B cell (primary cell): ENCODE measurements at regions of chr6 and their contacts with region 1.

Region 1: DNA sequence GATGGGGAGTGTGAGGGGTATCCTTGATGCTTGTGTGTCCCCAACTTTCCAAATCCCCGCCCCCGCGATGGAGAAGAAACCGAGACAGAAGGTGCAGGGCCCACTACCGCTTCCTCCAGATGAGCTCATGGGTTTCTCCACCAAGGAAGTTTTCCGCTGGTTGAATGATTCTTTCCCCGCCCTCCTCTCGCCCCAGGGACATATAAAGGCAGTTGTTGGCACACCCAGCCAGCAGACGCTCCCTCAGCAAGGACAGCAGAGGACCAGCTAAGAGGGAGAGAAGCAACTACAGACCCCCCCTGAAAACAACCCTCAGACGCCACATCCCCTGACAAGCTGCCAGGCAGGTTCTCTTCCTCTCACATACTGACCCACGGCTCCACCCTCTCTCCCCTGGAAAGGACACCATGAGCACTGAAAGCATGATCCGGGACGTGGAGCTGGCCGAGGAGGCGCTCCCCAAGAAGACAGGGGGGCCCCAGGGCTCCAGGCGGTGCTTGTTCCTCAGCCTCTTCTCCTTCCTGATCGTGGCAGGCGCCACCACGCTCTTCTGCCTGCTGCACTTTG is at the start of gene TNF:
- DNase-seq: peak; percentile 84
- ATAC-seq: peak; percentile 40
- H3K4me3 ChIP-seq: peak within 1 kb of the TSS; percentile 74 to 87 (median 77)
- H3K4me3 Mint-ChIP-seq: peak within 1 kb of the TSS; percentile 89
- H3K27ac ChIP-seq: peak within 1 kb of the TSS; percentile 77 to 89
- H3K27ac Mint-ChIP-seq: peak within 1 kb of the TSS; percentile 93
- H3K4me1 ChIP-seq: peaks cover 80 to 99% of the 10 kb centered on the region in 2 donors
- H3K4me1 Mint-ChIP-seq: peaks cover 94% of the 10 kb centered on the region
- H3K27me3 ChIP-seq: no peaks in the 10 kb centered on the region
- H3K27me3 Mint-ChIP-seq: no peaks in the 10 kb centered on the region
- CTCF ChIP-seq: no peak
- total RNA-seq, gene TNF: 22.2 and 22.6 TPM in 2 replicates

Region 2: GRCh38 chr6:31216208-31216898 is 359.1 kb before region 1 on chr6:
- CTCF ChIA-PET with region 1: no interaction called
- POLR2A ChIA-PET with region 1: interaction called, 10 read pairs
- intact Hi-C with region 1: no loop called
- DNase-seq: peak; percentile 25
- ATAC-seq: peak; percentile 41
- H3K4me3 ChIP-seq: peak overlapping the region in 1 of 5 experiments; percentile 20
- H3K4me3 Mint-ChIP-seq: peak overlapping the region; percentile 8
- H3K27ac ChIP-seq: peak overlapping the region; percentile 64 to 66
- H3K27ac Mint-ChIP-seq: peak overlapping the region; percentile 70
- H3K4me1 ChIP-seq: peaks cover 9 to 13% of the 10 kb centered on the region in 2 donors
- H3K4me1 Mint-ChIP-seq: peaks cover 7% of the 10 kb centered on the region
- H3K27me3 ChIP-seq: no peaks in the 10 kb centered on the region
- H3K27me3 Mint-ChIP-seq: no peaks in the 10 kb centered on the region
- CTCF ChIP-seq: no peak

Region 3: DNA sequence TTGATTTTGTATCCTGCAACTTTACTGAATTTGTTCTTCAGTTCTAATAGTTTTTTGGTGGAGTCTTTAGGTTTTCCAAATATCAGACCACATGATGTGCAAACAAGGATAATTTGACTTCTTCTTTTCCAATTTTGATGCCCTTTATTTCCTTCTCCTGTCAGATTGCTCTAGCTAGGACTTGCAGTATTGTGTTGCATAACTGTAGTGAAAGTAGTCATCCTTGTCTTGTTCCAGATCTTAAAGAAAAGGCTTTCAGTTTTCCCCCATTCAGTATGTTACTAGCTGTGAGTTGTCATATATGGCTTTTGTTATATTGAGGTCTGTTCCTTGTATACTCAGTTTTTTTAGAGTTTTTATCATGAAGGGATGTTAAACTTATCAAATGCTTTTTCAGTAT is 72.8 kb before region 1 on chr6:
- CTCF ChIA-PET with region 1: no interaction called
- POLR2A ChIA-PET with region 1: no interaction called
- intact Hi-C with region 1: no loop called
- DNase-seq: no peak
- ATAC-seq: no peak
- H3K4me3 ChIP-seq: no peak overlapping the region
- H3K4me3 Mint-ChIP-seq: no peak overlapping the region
- H3K27ac ChIP-seq: no peak overlapping the region
- H3K27ac Mint-ChIP-seq: no peak overlapping the region
- H3K4me1 ChIP-seq: peaks cover 10 to 12% of the 10 kb centered on the region in 2 donors
- H3K4me1 Mint-ChIP-seq: peaks cover 49% of the 10 kb centered on the region
- H3K27me3 ChIP-seq: no peaks in the 10 kb centered on the region
- H3K27me3 Mint-ChIP-seq: no peaks in the 10 kb centered on the region
- CTCF ChIP-seq: no peak

Region 4: GRCh38 chr6:31559958-31560696 is 15.3 kb before region 1 on chr6:
- CTCF ChIA-PET with region 1: interaction called, 2,241 read pairs
- POLR2A ChIA-PET with region 1: interaction called, 1,450 read pairs
- intact Hi-C with region 1: loop called (anchors 1 kb)
- DNase-seq: peak; percentile 83
- ATAC-seq: peak; percentile 64
- H3K4me3 ChIP-seq: peak overlapping the region; percentile 4 to 61 (median 45)
- H3K4me3 Mint-ChIP-seq: peak overlapping the region; percentile 92
- H3K27ac ChIP-seq: peak overlapping the region; percentile 80 to 87
- H3K27ac Mint-ChIP-seq: peak overlapping the region; percentile 94
- H3K4me1 ChIP-seq: peaks cover 80 to 81% of the 10 kb centered on the region in 2 donors
- H3K4me1 Mint-ChIP-seq: peaks cover 82% of the 10 kb centered on the region
- H3K27me3 ChIP-seq: no peaks in the 10 kb centered on the region
- H3K27me3 Mint-ChIP-seq: no peaks in the 10 kb centered on the region
- CTCF ChIP-seq: no peak

Region 5: DNA sequence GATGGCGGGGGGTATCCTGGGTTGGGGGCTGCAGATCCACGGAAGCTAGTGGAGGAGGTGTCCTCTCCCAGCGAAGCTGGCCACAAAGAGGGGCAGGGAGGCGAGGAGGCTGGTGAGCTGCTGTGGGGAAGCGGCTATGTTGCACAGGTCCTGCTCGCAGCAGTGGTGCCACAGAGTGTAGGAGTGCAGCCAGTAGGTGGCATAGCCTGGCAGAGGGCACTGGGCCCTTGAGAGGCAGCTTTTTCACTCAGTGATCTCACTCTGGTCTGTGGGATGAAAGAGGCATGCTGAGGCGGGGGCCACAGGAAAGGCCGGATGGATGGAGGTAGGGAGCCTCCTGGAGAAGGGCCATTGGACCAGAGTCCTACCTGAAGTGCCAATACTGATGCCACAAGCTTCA is 136.9 kb after region 1 on chr6:
- CTCF ChIA-PET with region 1: no interaction called
- POLR2A ChIA-PET with region 1: interaction called, 13 read pairs
- intact Hi-C with region 1: no loop called
- DNase-seq: peak; percentile 54
- ATAC-seq: peak; percentile 71
- H3K4me3 ChIP-seq: no peak overlapping the region
- H3K4me3 Mint-ChIP-seq: no peak overlapping the region
- H3K27ac ChIP-seq: no peak overlapping the region
- H3K27ac Mint-ChIP-seq: no peak overlapping the region
- H3K4me1 ChIP-seq: peaks cover 10 to 16% of the 10 kb centered on the region in 2 donors
- H3K4me1 Mint-ChIP-seq: peaks cover 14% of the 10 kb centered on the region
- H3K27me3 ChIP-seq: peaks cover 0 to 6% (median 0%) of the 10 kb centered on the region in 4 experiments
- H3K27me3 Mint-ChIP-seq: peaks cover 3% of the 10 kb centered on the region
- CTCF ChIP-seq: peak; percentile 42